CD4-positive, alpha-beta memory T cell (primary cell): ENCODE measurements at regions of chr2 and their contacts with region 1.

Region 1: DNA sequence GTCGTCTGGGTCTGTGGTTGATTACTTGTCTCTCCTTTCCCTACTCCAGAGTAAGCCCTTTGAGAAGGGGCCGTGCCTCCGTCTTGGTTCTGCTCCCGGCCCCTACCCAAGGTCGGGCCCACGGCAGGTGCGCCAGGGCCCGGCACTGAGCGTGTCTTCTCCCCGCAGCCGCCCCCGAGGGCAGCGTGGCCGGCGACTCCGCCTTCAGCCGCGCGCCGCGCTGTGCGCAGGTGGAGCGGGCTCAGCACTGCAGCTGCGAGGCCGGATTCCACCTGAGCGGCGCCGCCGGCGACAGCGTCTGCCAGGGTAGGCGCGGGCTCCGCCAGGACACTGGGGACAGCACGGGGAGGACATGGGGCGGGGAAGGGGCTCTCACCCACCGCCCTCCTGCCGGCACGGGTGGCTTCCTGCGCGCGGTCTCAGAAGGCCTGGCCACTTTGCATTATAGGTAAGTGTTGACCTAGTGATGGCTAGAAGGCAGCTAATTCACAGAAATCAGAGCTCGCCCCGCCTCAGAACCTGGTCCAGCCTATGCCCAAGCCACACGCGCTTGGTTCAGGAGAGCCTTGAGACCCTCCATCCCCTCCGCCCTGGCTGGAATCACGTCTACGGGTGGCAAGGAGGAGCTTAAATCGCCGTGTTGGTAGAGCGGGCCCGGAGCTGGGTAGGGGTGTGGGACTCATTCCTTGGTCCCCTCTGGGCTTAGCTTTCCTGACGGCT is 43.5 kb downstream of the FBLN7 start:
- DNase-seq: peak; percentile 72 to 79 (median 76)
- H3K4me3 ChIP-seq: peak overlapping the region; percentile 71 to 77
- H3K4me3 Mint-ChIP-seq: peak overlapping the region; percentile 87 to 94 (median 90)
- H3K27ac ChIP-seq: peak overlapping the region; percentile 72
- H3K27ac Mint-ChIP-seq: peak overlapping the region; percentile 93 to 98 (median 96)
- H3K4me1 ChIP-seq: peaks cover 54% of the 10 kb centered on the region
- H3K4me1 Mint-ChIP-seq: peaks cover 38 to 78% (median 60%) of the 10 kb centered on the region in 4 donors
- H3K27me3 ChIP-seq: no peaks in the 10 kb centered on the region
- H3K27me3 Mint-ChIP-seq: no peaks in the 10 kb centered on the region

Region 2: DNA sequence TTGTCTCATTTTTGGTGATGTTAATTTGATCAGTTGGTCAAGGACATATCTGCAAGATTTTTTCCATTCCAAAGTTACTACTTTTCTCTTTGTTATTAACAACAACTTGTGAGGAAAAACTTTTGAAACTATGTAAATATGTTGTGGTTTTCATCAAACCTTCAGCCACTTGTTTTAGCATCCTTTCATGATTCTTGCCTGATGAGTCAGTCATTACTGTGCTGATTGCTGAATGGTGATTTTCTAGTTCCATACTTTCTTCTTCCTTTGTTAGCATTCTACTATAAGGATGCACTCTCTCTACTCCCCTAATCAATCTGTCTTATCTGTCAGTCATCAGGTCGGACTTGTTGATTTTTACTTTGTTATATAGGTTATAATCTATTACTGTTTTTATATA is 115.8 kb before region 1 on chr2:
- CTCF ChIA-PET with region 1: no interaction called
- POLR2A ChIA-PET with region 1: no interaction called
- intact Hi-C with region 1: no loop called
- DNase-seq: no peak
- H3K4me3 ChIP-seq: no peak overlapping the region
- H3K4me3 Mint-ChIP-seq: no peak overlapping the region
- H3K27ac ChIP-seq: no peak overlapping the region
- H3K27ac Mint-ChIP-seq: peak overlapping the region in 1 of 7 donors; percentile 26
- H3K4me1 ChIP-seq: no peaks in the 10 kb centered on the region
- H3K4me1 Mint-ChIP-seq: peaks cover 31 to 52% (median 47%) of the 10 kb centered on the region in 4 donors
- H3K27me3 ChIP-seq: no peaks in the 10 kb centered on the region
- H3K27me3 Mint-ChIP-seq: no peaks in the 10 kb centered on the region

Region 3: GRCh38 chr2:112121682-112122254 is 60.0 kb before region 1 on chr2:
- CTCF ChIA-PET with region 1: interaction called, 10 read pairs
- POLR2A ChIA-PET with region 1: interaction called, 3 read pairs
- intact Hi-C with region 1: loop called (anchors 5 kb)
- DNase-seq: peak; percentile 46 to 58 (median 52)
- H3K4me3 ChIP-seq: no peak overlapping the region
- H3K4me3 Mint-ChIP-seq: no peak overlapping the region
- H3K27ac ChIP-seq: no peak overlapping the region
- H3K27ac Mint-ChIP-seq: peak overlapping the region in 3 of 7 donors; percentile 16 to 68 (median 38)
- H3K4me1 ChIP-seq: no peaks in the 10 kb centered on the region
- H3K4me1 Mint-ChIP-seq: no peaks in the 10 kb centered on the region
- H3K27me3 ChIP-seq: no peaks in the 10 kb centered on the region
- H3K27me3 Mint-ChIP-seq: no peaks in the 10 kb centered on the region

Region 4: GRCh38 chr2:112156152-112156986 is 25.4 kb before region 1 on chr2:
- CTCF ChIA-PET with region 1: no interaction called
- POLR2A ChIA-PET with region 1: interaction called, 41 read pairs
- intact Hi-C with region 1: no loop called
- DNase-seq: peak in 2 of 5 donors; percentile 21 to 51
- H3K4me3 ChIP-seq: peak overlapping the region; percentile 23 to 53
- H3K4me3 Mint-ChIP-seq: peak overlapping the region; percentile 78 to 89 (median 82)
- H3K27ac ChIP-seq: peak overlapping the region; percentile 16
- H3K27ac Mint-ChIP-seq: peak overlapping the region; percentile 82 to 95 (median 89)
- H3K4me1 ChIP-seq: peaks cover 28% of the 10 kb centered on the region
- H3K4me1 Mint-ChIP-seq: peaks cover 23 to 37% (median 31%) of the 10 kb centered on the region in 4 donors
- H3K27me3 ChIP-seq: no peaks in the 10 kb centered on the region
- H3K27me3 Mint-ChIP-seq: no peaks in the 10 kb centered on the region

Region 5: DNA sequence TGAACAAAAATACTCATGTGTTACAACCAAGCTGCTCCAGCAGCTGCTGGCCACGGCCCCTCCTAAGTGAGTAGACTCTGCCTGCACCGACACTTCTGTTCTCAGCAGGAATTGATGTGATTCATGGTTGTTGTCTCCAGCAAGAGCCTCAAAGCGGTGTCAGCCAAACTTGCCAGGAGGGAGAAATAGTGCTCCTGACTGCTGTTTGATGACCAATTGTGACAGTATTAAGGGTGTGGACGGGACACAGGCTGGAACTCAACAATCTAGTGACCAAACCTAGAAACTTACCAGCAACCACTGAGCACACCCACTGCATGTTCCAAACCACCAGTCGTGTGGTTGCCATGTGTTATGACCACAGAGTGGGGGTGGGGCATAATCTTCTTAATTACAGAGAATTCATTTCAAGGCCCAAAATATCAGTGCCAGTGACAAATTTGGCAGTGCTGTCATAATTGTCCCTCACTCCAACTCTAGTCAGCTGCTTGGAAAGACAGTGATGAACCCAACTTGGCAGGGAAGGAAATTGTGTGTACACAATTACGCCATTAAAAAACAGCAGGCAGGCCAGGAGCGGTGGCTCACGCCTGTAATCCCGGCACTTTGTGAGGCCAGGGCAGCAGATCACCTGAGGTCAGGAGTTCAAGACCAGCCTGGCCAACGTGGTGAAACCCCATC is 13.2 kb before region 1 on chr2:
- CTCF ChIA-PET with region 1: interaction called, 7 read pairs
- POLR2A ChIA-PET with region 1: interaction called, 17 read pairs
- intact Hi-C with region 1: no loop called
- DNase-seq: no peak
- H3K4me3 ChIP-seq: no peak overlapping the region
- H3K4me3 Mint-ChIP-seq: no peak overlapping the region
- H3K27ac ChIP-seq: no peak overlapping the region
- H3K27ac Mint-ChIP-seq: no peak overlapping the region
- H3K4me1 ChIP-seq: peaks cover 1% of the 10 kb centered on the region
- H3K4me1 Mint-ChIP-seq: peaks cover 10 to 17% (median 11%) of the 10 kb centered on the region in 4 donors
- H3K27me3 ChIP-seq: no peaks in the 10 kb centered on the region
- H3K27me3 Mint-ChIP-seq: no peaks in the 10 kb centered on the region

Region 6: GRCh38 chr2:112195167-112195766 is 13.5 kb after region 1 on chr2:
- CTCF ChIA-PET with region 1: interaction called, 7 read pairs
- POLR2A ChIA-PET with region 1: interaction called, 73 read pairs
- intact Hi-C with region 1: no loop called
- DNase-seq: no peak
- H3K4me3 ChIP-seq: no peak overlapping the region
- H3K4me3 Mint-ChIP-seq: peak overlapping the region in 2 of 8 donors; percentile 17 to 64
- H3K27ac ChIP-seq: no peak overlapping the region
- H3K27ac Mint-ChIP-seq: peak overlapping the region in 5 of 7 donors; percentile 13 to 86 (median 22)
- H3K4me1 ChIP-seq: peaks cover 47% of the 10 kb centered on the region
- H3K4me1 Mint-ChIP-seq: peaks cover 33 to 51% (median 38%) of the 10 kb centered on the region in 4 donors
- H3K27me3 ChIP-seq: no peaks in the 10 kb centered on the region
- H3K27me3 Mint-ChIP-seq: no peaks in the 10 kb centered on the region

Region 7: DNA sequence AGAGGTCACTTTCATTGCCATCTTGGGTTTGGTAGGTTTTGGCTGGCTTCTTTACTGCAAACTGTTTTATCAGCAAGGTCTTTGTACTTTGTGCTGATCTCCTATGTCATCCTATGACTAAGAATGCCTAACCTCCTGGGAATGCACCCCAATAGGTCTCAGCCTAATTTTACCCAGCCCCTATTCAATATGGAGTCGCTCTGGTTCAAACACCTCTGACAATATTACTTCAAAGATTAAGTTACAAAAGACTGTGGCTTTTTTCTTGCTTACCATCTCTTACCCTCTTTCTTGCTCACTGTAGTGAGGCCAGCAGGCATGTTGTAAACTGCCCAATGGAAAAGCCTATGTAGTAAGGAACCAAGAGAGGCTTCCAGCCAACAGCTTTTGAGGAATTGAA is 269.6 kb after region 1 on chr2:
- CTCF ChIA-PET with region 1: no interaction called
- POLR2A ChIA-PET with region 1: no interaction called
- intact Hi-C with region 1: no loop called
- DNase-seq: no peak
- H3K4me3 ChIP-seq: no peak overlapping the region
- H3K4me3 Mint-ChIP-seq: no peak overlapping the region
- H3K27ac ChIP-seq: no peak overlapping the region
- H3K27ac Mint-ChIP-seq: no peak overlapping the region
- H3K4me1 ChIP-seq: no peaks in the 10 kb centered on the region
- H3K4me1 Mint-ChIP-seq: no peaks in the 10 kb centered on the region
- H3K27me3 ChIP-seq: no peaks in the 10 kb centered on the region
- H3K27me3 Mint-ChIP-seq: peaks cover 0 to 1% of the 10 kb centered on the region in 2 donors